ENCODE measurements at regions of chr5 and their contacts with region 1.

Region 1: DNA sequence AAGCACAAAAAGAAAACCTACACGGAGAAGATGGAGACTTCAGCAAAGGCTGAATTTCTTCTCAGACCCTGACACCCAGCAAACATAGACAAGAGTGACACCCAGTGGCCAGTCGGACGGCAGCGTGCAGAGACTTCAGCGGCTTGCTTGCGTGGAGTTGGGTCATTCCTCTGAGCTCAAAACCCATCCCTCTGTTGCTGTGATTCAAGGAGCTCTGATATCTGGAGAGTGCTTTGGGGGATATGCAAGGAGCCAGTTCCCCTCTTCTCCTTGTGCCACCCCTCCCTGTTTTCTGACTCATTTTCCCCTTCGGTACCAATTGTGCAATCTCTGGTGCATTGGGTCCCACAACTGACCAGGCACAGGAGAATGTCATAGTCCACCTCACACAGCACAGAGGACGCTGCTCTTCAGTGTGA is 27.5 kb downstream of the SH3TC2 start:
- DNase-seq: peak; percentile 83
- H3K4me3 Mint-ChIP-seq: no peak overlapping the region
- H3K27ac Mint-ChIP-seq: no peak overlapping the region
- H3K4me1 Mint-ChIP-seq: peaks cover 35% of the 10 kb centered on the region
- H3K27me3 Mint-ChIP-seq: no peaks in the 10 kb centered on the region

Region 2: DNA sequence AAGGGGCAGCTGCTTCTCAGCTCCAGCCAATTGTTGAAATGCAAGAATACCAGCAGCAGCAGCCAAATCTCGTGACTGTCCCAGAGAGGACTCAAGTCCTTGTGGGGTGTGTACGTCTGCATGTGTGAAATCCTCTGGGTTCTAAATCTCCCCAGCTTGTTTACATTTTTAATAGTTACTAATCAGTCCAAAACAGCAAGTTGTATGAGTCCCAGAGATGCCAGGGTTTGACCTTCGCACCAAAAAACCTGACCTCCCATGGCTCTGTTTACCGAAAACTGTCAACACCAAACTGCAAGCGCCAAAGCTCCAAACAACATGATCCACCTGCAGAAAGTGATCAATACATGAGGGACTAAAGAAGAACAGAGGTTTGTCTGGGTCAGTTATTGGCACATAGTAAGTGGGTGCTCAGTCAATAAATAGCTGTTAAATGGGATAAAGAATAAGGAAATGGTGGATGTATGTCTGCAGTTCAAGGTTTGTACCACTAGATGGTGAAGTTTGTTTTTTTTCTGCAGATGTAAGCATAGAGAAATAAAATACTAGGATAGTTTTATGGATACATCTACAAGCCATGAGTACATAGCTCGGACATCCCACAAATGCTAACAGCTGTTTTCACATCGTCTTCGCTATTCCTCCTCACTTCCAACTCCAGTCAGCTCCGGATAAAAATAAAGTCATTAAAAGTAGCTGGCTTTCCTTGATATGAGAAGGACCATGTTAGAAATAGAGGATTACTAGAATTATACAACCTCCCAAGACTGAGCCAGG is 294.2 kb before region 1 on chr5:
- CTCF ChIA-PET with region 1: interaction called, 393 read pairs
- POLR2A ChIA-PET with region 1: no interaction called
- intact Hi-C with region 1: loop called (anchors 1 kb)
- DNase-seq: no peak
- H3K4me3 Mint-ChIP-seq: no peak overlapping the region
- H3K27ac Mint-ChIP-seq: no peak overlapping the region
- H3K4me1 Mint-ChIP-seq: no peaks in the 10 kb centered on the region
- H3K27me3 Mint-ChIP-seq: peaks cover 17% of the 10 kb centered on the region

Region 3: GRCh38 chr5:148820461-148821395 is 214.7 kb before region 1 on chr5:
- CTCF ChIA-PET with region 1: interaction called, 17 read pairs
- POLR2A ChIA-PET with region 1: no interaction called
- intact Hi-C with region 1: loop called (anchors 5 kb)
- DNase-seq: no peak
- H3K4me3 Mint-ChIP-seq: no peak overlapping the region
- H3K27ac Mint-ChIP-seq: no peak overlapping the region
- H3K4me1 Mint-ChIP-seq: peaks cover 6% of the 10 kb centered on the region
- H3K27me3 Mint-ChIP-seq: peaks cover 5% of the 10 kb centered on the region

Region 4: GRCh38 chr5:148998174-148998797 is 37.1 kb before region 1 on chr5:
- CTCF ChIA-PET with region 1: interaction called, 19 read pairs
- POLR2A ChIA-PET with region 1: no interaction called
- intact Hi-C with region 1: loop called (anchors 5 kb)
- DNase-seq: no peak
- H3K4me3 Mint-ChIP-seq: no peak overlapping the region
- H3K27ac Mint-ChIP-seq: no peak overlapping the region
- H3K4me1 Mint-ChIP-seq: no peaks in the 10 kb centered on the region
- H3K27me3 Mint-ChIP-seq: peaks cover 10% of the 10 kb centered on the region

Region 5: GRCh38 chr5:149046196-149046829 is 10.9 kb after region 1 on chr5:
- CTCF ChIA-PET with region 1: interaction called, 11 read pairs
- POLR2A ChIA-PET with region 1: no interaction called
- intact Hi-C with region 1: no loop called
- DNase-seq: no peak
- H3K4me3 Mint-ChIP-seq: no peak overlapping the region
- H3K27ac Mint-ChIP-seq: no peak overlapping the region
- H3K4me1 Mint-ChIP-seq: no peaks in the 10 kb centered on the region
- H3K27me3 Mint-ChIP-seq: peaks cover 2% of the 10 kb centered on the region

Region 6: GRCh38 chr5:149069452-149070110 is 34.2 kb after region 1 on chr5:
- CTCF ChIA-PET with region 1: no interaction called
- POLR2A ChIA-PET with region 1: no interaction called
- intact Hi-C with region 1: no loop called
- DNase-seq: no peak
- H3K4me3 Mint-ChIP-seq: no peak overlapping the region
- H3K27ac Mint-ChIP-seq: no peak overlapping the region
- H3K4me1 Mint-ChIP-seq: no peaks in the 10 kb centered on the region
- H3K27me3 Mint-ChIP-seq: no peaks in the 10 kb centered on the region

Region 7: DNA sequence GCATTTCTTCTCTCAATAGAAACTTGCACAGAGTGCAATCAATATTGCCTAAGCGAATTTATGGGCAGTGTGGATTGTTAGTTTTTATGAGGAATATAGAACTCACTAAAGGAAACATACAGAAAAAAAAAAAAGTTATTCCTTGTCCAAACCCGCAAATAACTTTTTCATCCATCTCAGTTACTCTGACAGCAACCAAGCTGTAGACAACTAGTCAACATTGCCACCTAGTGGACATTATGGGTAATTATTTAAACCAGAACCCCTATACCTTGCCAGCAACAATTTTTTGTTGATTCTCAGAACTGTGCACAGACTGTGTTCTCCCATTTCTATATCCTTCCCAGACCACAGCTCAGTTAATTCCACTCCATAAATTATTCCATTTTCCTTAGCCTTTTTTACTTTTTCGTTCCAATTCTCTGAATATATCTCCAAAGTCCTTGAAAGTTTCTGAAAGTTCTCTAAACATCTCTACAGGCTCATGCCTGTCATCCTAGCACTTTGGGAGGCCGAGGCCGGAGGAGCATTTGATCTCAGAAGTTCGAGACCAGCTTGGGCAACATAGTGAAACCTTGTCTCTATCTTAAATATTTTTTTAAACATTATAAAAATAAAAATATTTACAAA is 233.7 kb after region 1 on chr5:
- CTCF ChIA-PET with region 1: interaction called, 6 read pairs
- POLR2A ChIA-PET with region 1: no interaction called
- intact Hi-C with region 1: loop called (anchors 2 kb)
- DNase-seq: no peak
- H3K4me3 Mint-ChIP-seq: no peak overlapping the region
- H3K27ac Mint-ChIP-seq: no peak overlapping the region
- H3K4me1 Mint-ChIP-seq: peaks cover 12% of the 10 kb centered on the region
- H3K27me3 Mint-ChIP-seq: peaks cover 23% of the 10 kb centered on the region